Esophagus muscularis mucosa (tissue), 4 donors: ENCODE measurements at regions of chr2 and their contacts with region 1.

Region 1: GRCh38 chr2:156400706-156401678 is 35.2 kb upstream of the GPD2 start:
- DNase-seq: peak; percentile 97
- H3K4me3 ChIP-seq: peak overlapping the region; percentile 59 to 76 (median 69)
- H3K27ac ChIP-seq: peak overlapping the region; percentile 88 to 97 (median 92)
- H3K4me1 ChIP-seq: peaks cover 7 to 13% (median 9%) of the 10 kb centered on the region in 4 donors
- H3K27me3 ChIP-seq: no peaks in the 10 kb centered on the region
- CTCF ChIP-seq: no peak
- EP300 ChIP-seq: no peak
- POLR2A ChIP-seq: peak; percentile 15

Region 2: DNA sequence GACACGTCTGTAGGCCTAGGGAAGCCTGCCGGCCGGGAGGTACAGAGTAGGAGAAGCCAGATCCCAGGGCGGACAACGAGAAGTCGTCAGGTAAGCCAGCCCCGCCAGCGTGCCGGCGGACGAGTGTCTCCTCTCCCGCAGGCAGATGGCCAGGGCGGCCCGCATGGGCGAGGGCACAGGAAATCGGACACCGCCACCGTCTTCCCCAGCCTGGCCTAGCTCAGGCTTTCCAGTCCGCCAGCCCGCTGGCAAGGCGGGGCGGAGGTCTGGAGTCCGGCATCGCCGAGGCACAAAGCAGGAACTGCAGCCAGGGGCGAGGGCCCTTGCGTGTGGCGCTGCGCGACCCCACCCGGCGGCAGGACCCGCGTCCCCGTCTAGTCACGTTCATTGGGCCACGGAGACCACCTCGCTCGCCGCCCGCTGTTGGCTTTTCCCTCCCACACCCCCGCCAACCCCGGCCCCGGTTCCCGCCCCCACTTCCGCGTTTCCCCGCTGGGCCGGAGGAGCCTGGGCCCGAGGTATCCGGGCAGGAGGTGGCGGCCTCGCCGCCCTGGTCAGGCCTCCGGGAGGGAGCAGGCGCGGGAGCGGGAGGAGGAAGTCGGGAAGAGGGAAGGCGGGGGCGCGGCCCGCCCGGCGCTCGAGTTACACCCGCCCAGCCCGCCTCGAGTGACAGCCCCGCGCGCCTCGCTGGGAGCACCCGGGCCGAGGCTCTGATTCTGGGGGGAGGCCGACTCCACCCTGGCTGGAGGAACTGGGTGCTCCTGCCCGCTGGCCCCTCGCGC is 34.9 kb after region 1 on chr2 and contains the start of gene GPD2:
- intact Hi-C with region 1: loop called (anchors 2 kb)
- DNase-seq: peak; percentile 97
- H3K4me3 ChIP-seq: peak within 1 kb of the TSS; percentile 66 to 89 (median 81)
- H3K27ac ChIP-seq: peak within 1 kb of the TSS; percentile 92 to 99 (median 98)
- H3K4me1 ChIP-seq: peaks cover 7 to 38% (median 35%) of the 10 kb centered on the region in 4 donors
- H3K27me3 ChIP-seq: no peaks in the 10 kb centered on the region
- CTCF ChIP-seq: peak in 1 of 3 experiments; percentile 6
- EP300 ChIP-seq: no peak
- POLR2A ChIP-seq: peak; percentile 82
- total RNA-seq, gene GPD2: 19.5 to 26.0 (median 22.5) TPM

Region 3: GRCh38 chr2:156466739-156467405 is 65.9 kb after region 1 on chr2:
- intact Hi-C with region 1: no loop called
- DNase-seq: no peak
- H3K4me3 ChIP-seq: peak overlapping the region; percentile 9 to 30 (median 28)
- H3K27ac ChIP-seq: peak overlapping the region; percentile 32 to 61 (median 54)
- H3K4me1 ChIP-seq: peaks cover 22 to 42% (median 40%) of the 10 kb centered on the region in 4 donors
- H3K27me3 ChIP-seq: no peaks in the 10 kb centered on the region
- CTCF ChIP-seq: no peak
- EP300 ChIP-seq: no peak
- POLR2A ChIP-seq: no peak